ENCODE measurements at regions of chr2 and their contacts with region 1.

Region 1: DNA sequence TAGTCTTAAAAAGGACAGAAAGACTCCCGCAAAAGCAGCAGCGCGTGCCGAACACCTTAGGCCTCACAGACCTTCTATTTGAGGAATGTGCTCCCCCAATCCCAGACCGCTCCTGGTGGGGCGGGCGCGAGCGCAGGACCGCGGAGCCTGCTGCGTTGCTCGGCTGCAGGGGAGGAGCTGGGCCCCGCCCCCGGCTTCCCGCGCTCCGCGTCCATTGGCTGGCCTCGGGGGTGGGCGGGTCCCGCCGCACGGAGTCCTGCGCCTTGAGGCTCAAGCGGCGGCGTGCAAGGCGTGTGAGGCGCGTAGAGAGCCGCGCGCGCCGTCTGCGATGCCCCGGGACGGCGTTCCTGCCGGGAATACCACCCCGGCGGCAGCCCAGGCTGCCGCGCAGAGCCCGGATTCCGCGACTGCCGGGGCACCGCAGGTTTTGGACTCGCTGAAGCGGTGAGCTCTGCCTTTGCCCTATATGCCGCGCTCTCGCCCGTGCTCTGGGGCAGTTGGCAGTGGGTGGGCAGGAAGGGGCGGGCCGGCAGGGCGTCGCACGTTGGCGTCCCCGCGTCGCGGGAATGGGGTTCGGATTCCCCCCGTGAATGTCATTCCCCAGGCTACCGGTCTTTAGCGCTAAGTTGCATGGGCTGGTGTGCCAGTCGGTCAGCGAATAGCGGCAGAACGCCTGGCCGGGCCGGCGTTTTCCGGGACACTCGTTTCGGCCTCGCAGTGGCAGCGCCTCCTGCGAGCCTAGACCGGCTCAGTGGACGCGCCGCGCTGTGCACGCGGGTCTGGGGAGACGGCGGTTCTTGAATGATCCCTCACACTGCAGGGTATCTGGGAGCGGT is 49.6 kb upstream of the PAIP2B start:
- DNase-seq: peak; percentile 39
- ATAC-seq: peak; percentile 97
- H3K4me3 ChIP-seq: peak overlapping the region; percentile 60 to 67
- H3K27ac ChIP-seq: peak overlapping the region; percentile 75
- H3K4me1 ChIP-seq: peaks cover 15% of the 10 kb centered on the region; the same call in 1 of the 2 replicates
- H3K27me3 ChIP-seq: 0 out of 2 replicates have a peak, but pooled peaks cover 3% of the 10 kb centered on the region
- CTCF ChIP-seq: no peak

Region 2: DNA sequence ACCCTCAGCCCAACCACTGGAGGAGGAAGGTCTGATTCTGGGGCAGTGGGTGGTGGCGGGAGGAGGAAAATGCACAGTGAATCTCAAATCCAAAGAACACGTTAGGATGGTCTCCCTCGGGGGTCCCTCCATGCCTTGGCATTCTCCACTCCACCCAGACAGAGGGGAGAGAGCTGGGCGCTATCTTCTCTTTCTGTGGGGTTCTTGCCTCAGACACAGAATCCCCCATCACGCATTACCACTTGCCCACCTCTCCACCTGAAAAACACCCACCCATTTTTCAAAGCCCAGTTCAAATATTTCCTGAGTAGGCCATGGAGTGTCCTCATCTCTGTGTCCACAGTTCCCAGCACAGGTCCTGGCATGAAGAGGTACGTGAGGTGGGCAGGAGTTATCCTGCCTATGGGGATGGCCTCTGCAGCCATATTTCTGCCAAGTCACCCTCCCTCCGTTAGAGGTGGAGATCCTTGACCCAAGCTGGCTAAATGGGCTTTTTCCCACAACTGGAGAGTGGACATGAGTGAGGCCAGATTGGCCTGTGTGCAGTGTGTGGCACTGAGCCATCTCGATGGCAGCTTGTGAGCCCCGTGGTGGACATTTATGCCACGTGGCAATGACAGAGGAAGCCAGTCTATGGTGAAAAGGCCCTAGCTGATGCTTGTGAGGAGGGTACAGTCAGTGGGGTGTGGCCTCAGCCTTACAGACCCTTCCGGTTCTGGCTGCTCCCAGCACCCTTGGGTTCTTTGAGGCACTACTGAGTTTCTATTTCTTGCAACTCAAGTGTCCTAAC is 272.4 kb before region 1 on chr2:
- CTCF ChIA-PET with region 1: interaction called, 10 read pairs
- POLR2A ChIA-PET with region 1: no interaction called
- in situ Hi-C with region 1: no loop called
- intact Hi-C with region 1: no loop called
- DNase-seq: no peak
- ATAC-seq: no peak
- H3K4me3 ChIP-seq: no peak overlapping the region
- H3K27ac ChIP-seq: no peak overlapping the region
- H3K4me1 ChIP-seq: no peaks in the 10 kb centered on the region
- H3K27me3 ChIP-seq: no peaks in the 10 kb centered on the region
- CTCF ChIP-seq: no peak

Region 3: GRCh38 chr2:71226965-71227560 is 49.5 kb before region 1 on chr2 and contains the start of gene PAIP2B:
- CTCF ChIA-PET with region 1: interaction called, 4 read pairs
- POLR2A ChIA-PET with region 1: interaction called, 3 read pairs
- in situ Hi-C with region 1: no loop called
- intact Hi-C with region 1: loop called (anchors 5 kb)
- DNase-seq: peak; percentile 97
- ATAC-seq: peak; percentile 97
- H3K4me3 ChIP-seq: peak within 1 kb of the TSS; percentile 63 to 72
- H3K27ac ChIP-seq: peak within 1 kb of the TSS; percentile 44; the same call in 1 of the 2 replicates
- H3K4me1 ChIP-seq: peaks cover 5% of the 10 kb centered on the region; the same call in 1 of the 2 replicates
- H3K27me3 ChIP-seq: peaks cover 2% of the 10 kb centered on the region; the same call in 1 of the 2 replicates
- CTCF ChIP-seq: no peak
- total RNA-seq, gene PAIP2B: 1.4 TPM

Region 4: GRCh38 chr2:71299507-71299906 is 23.0 kb after region 1 on chr2:
- CTCF ChIA-PET with region 1: interaction called, 10 read pairs
- POLR2A ChIA-PET with region 1: no interaction called
- in situ Hi-C with region 1: no loop called
- intact Hi-C with region 1: no loop called
- DNase-seq: peak; percentile 22
- ATAC-seq: no peak
- H3K4me3 ChIP-seq: no peak overlapping the region
- H3K27ac ChIP-seq: no peak overlapping the region
- H3K4me1 ChIP-seq: no peaks in the 10 kb centered on the region
- H3K27me3 ChIP-seq: no peaks in the 10 kb centered on the region
- CTCF ChIP-seq: peak; percentile 75; the same call in 1 of the 2 replicates

Measured in Panc1 (cell line).